Panc1 (cell line): ENCODE measurements at regions of chr1 and their contacts with region 1.

Region 1: DNA sequence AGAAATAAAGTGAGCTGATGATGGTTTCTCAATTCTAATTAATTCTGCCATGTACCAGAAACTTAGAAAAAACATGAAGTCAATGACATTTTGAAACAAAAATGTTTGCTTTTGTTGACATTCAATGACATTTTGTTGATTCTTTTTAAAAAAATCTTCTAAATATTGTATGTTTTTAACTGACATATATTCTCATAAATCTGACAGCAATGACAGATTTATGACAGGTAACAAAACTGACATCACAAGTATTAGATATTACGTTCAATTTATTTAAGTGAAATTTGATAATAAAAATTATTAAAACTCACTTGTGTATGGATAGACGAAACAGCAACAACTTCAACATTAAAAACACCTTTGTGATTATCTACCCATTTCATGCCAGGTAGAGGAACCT is 36.0 kb upstream of the ANGPTL3 start:
- DNase-seq: no peak
- ATAC-seq: no peak
- H3K4me3 ChIP-seq: no peak overlapping the region
- H3K27ac ChIP-seq: no peak overlapping the region
- H3K4me1 ChIP-seq: no peaks in the 10 kb centered on the region
- H3K27me3 ChIP-seq: no peaks in the 10 kb centered on the region
- CTCF ChIP-seq: no peak

Region 2: DNA sequence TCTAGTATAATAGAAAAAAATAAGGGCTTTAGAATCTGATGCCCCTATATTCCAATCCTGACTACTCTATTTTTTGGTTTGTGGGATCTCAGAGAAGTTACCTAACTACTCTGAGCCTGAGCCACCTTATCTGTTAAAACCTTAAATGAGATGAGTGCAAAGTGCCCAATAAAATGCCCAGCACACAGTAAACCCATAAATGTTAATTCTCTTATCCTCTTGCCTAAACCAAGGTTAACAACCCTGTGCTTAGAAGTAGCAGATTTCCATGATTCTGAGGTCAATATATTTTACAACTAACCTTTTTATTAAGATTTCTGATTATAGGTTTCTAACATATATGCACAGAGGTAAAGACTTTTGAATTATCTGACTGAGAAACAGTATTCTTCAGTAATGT is 91.1 kb after region 1 on chr1:
- CTCF ChIA-PET with region 1: no interaction called
- POLR2A ChIA-PET with region 1: interaction called, 12 read pairs
- in situ Hi-C with region 1: no loop called
- intact Hi-C with region 1: no loop called
- DNase-seq: no peak
- ATAC-seq: no peak
- H3K4me3 ChIP-seq: no peak overlapping the region
- H3K27ac ChIP-seq: no peak overlapping the region
- H3K4me1 ChIP-seq: no peaks in the 10 kb centered on the region
- H3K27me3 ChIP-seq: no peaks in the 10 kb centered on the region
- CTCF ChIP-seq: no peak

Region 3: GRCh38 chr1:63969441-63969901 is 1408.2 kb after region 1 on chr1:
- CTCF ChIA-PET with region 1: no interaction called
- POLR2A ChIA-PET with region 1: no interaction called
- in situ Hi-C with region 1: no loop called
- intact Hi-C with region 1: no loop called
- DNase-seq: no peak
- ATAC-seq: no peak
- H3K4me3 ChIP-seq: no peak overlapping the region
- H3K27ac ChIP-seq: no peak overlapping the region
- H3K4me1 ChIP-seq: 0 out of 2 replicates have a peak, but pooled peaks cover 3% of the 10 kb centered on the region
- H3K27me3 ChIP-seq: no peaks in the 10 kb centered on the region
- CTCF ChIP-seq: no peak